ENCODE measurements at regions of chr1 and their contacts with region 1.

Region 1: DNA sequence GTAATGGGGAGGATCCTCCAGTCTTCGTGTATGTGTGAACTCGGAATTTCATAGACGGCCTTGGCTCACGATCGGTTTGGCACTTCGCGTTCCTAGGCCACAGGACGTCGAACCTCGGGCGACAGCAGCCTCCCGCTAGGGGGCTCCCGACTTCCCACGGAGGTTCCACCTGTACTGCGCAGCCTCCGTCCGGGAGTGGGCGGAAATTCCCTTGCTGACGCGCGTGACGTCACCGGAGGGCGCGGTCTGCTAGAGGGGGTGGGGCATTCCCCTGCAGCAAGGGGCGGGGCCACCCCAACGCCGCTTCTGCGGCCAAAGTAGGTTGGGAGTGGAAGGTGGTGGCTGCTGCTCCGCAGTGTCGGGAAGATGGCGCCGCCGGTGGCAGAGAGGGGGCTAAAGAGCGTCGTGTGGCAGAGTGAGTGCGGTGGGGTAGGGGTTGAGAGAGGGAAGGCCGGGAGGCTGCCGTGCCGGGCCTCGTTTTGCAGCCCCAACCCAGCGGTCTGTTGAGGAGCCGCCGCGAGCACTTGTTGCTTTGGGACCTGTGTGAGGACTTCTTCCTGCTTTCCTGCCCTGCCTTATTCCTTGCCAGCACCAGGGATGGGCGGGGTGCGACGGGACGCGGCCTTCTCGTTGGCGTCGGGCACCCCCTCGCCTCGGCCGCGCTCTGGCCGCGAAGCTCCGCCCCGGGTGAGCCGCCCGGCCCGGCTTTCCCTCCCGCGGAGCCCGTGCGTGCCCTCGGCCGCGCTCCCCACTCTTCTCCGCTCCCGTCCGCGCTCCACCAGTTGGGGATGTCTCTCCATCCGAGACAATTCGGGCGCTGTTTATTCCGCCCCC is at the start of gene STXBP3:
- DNase-seq: peak; percentile 97
- H3K4me3 Mint-ChIP-seq: peak within 1 kb of the TSS; percentile 92
- H3K27ac Mint-ChIP-seq: peak within 1 kb of the TSS; percentile 98
- H3K4me1 Mint-ChIP-seq: peaks cover 12% of the 10 kb centered on the region
- H3K27me3 Mint-ChIP-seq: no peaks in the 10 kb centered on the region
- CTCF ChIP-seq: peak; percentile 89
- total RNA-seq, gene STXBP3: 47.4 and 58.4 TPM in 2 replicates

Region 2: DNA sequence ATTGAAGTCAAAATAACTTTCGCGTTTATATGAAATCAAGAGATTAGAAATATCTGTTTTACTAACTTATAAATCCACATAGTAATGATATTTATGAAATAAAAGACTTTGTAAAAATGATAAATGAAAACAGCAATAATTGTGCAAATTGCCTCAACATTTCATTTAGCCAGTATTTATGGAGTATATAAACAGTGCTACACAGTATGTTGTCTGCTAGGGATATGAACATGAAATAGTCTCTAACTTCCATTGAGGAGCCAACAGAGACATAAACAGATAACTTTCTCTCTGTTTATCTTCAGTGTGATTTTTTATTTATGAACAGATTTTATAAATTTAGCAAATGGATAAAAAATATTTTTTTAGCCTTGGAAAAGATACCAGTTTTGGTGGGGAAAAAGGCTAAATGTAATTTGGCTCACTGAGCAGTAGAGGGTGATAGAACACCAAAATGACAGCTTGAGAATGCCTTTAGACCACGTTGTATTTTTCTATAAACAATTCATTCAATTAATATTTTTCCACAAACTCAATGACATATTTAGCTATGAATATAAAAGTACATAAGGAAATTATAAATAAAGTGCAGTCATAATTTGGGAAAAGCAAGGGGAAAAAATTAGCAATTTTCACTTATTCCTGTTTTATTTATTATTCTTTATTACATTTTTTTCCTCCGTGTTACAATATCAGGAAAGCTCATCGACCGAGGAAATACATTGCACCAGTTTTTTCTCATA is 234.2 kb before region 1 on chr1:
- CTCF ChIA-PET with region 1: no interaction called
- POLR2A ChIA-PET with region 1: no interaction called
- intact Hi-C with region 1: loop called (anchors 2 kb)
- DNase-seq: peak; percentile 52
- H3K4me3 Mint-ChIP-seq: no peak overlapping the region
- H3K27ac Mint-ChIP-seq: no peak overlapping the region
- H3K4me1 Mint-ChIP-seq: no peaks in the 10 kb centered on the region
- H3K27me3 Mint-ChIP-seq: peaks cover 15% of the 10 kb centered on the region
- CTCF ChIP-seq: peak; percentile 86

Region 3: DNA sequence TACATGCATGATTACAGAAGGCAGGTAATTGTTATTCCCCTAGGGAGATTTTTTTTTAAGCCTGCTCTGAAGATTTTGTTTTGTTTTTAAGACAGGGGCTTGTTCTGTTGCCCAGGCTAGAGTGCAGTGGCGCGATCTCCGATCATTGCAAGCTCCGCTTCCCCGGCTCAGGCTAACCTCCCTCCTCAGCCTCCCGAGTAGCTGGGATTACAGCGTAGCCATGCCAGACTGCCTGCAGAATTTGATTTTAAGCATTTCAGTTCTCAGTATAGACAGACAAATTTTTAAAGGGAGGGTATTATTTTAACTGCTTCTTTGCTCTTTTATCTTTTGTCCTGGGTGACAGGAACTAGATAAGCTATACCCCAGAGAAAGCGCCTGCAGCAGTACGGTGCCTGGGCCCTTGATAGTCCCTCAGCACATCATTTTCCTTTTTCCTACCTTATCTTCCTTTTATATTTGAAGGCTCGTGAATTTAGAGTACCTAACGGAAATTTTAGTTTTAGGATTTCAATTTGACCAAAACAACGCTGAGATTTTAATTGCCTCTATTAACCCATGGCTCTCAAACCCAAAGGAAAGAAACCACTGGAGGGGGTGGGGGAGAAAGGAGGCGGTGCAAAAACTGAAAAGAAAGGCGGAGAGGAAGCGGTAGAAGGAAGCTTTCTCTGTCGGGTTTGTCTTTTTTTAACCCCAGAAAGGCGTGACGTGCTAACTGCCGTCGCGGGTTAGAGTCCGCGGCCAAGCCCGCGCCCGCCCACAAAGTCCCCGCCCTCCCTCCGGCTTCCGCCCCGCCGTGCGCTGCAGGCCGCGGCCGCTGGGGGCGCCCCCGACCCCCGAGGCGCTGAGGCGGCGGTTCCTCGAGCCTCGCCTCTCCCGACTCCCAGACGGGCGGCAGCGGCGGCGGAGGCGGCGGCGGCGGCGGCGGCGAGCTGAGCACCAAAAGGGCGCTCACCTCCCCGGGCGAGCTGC is 187.1 kb before region 1 on chr1 and contains the start of gene EEIG2:
- CTCF ChIA-PET with region 1: interaction called, 4 read pairs
- POLR2A ChIA-PET with region 1: no interaction called
- intact Hi-C with region 1: loop called (anchors 2 kb)
- DNase-seq: peak; percentile 82
- H3K4me3 Mint-ChIP-seq: peak within 1 kb of the TSS; percentile 78
- H3K27ac Mint-ChIP-seq: no peak within 1 kb of the TSS
- H3K4me1 Mint-ChIP-seq: no peaks in the 10 kb centered on the region
- H3K27me3 Mint-ChIP-seq: no peaks in the 10 kb centered on the region
- CTCF ChIP-seq: peak; percentile 71
- total RNA-seq, gene EEIG2: 0.63 and 0.93 TPM in 2 replicates

Region 4: GRCh38 chr1:108703939-108704900 is 42.4 kb before region 1 on chr1:
- CTCF ChIA-PET with region 1: interaction called, 9 read pairs
- POLR2A ChIA-PET with region 1: interaction called, 8 read pairs
- intact Hi-C with region 1: loop called (anchors 1 kb)
- DNase-seq: peak; percentile 74
- H3K4me3 Mint-ChIP-seq: no peak overlapping the region
- H3K27ac Mint-ChIP-seq: peak overlapping the region; percentile 46
- H3K4me1 Mint-ChIP-seq: peaks cover 19% of the 10 kb centered on the region
- H3K27me3 Mint-ChIP-seq: no peaks in the 10 kb centered on the region
- CTCF ChIP-seq: no peak

Region 5: GRCh38 chr1:108719656-108720435 is 26.7 kb before region 1 on chr1:
- CTCF ChIA-PET with region 1: interaction called, 7 read pairs
- POLR2A ChIA-PET with region 1: interaction called, 15 read pairs
- intact Hi-C with region 1: loop called (anchors 1 kb)
- DNase-seq: peak; percentile 88
- H3K4me3 Mint-ChIP-seq: peak overlapping the region; percentile 10
- H3K27ac Mint-ChIP-seq: peak overlapping the region; percentile 78
- H3K4me1 Mint-ChIP-seq: peaks cover 17% of the 10 kb centered on the region
- H3K27me3 Mint-ChIP-seq: no peaks in the 10 kb centered on the region
- CTCF ChIP-seq: no peak

Region 6: DNA sequence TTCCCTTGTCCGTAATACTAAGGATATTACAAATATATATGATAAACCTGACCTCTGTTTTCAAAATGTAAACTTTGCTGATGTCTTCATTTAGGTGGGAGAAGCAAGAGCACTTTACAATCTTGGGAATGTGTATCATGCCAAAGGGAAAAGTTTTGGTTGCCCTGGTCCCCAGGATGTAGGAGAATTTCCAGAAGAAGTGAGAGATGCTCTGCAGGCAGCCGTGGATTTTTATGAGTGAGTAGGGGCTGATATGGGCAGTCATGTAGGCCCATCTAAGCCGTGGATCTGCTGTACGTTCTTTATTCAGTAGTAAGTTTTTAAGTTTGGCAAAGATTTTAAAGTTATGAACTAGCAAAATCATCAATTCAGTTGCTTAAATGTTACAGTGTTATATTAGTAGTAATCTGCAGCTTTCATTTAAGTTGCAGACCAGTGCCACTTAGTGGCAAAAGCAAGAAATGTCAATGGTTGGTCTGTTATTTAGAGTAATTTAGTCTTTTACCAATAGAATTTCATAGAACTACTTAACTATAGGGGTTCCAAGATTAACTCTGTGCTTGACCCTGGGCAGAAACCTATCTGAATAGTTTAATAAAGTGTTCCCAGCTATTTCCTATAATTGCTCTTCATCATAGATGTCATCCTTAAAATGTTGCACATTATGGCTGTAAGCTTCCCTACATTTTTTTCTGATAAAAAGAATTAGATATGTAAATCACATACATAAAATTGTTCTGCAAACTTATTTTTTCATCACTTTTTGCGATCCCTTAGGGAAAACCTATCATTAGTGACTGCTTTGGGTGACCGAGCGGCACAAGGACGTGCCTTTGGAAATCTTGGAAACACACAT is 151.5 kb after region 1 on chr1:
- CTCF ChIA-PET with region 1: no interaction called
- POLR2A ChIA-PET with region 1: interaction called, 3 read pairs
- intact Hi-C with region 1: loop called (anchors 1 kb)
- DNase-seq: peak; percentile 73
- H3K4me3 Mint-ChIP-seq: no peak overlapping the region
- H3K27ac Mint-ChIP-seq: peak overlapping the region; percentile 23
- H3K4me1 Mint-ChIP-seq: peaks cover 20% of the 10 kb centered on the region
- H3K27me3 Mint-ChIP-seq: no peaks in the 10 kb centered on the region
- CTCF ChIP-seq: peak; percentile 63